ENCODE measurements at regions of chr2 and their contacts with region 1.

Region 1: GRCh38 chr2:205680067-205680466 is 2.2 kb upstream of the NRP2 start:
- DNase-seq: peak in 9 of 14 experiments; percentile 10 to 68 (median 22)
- ATAC-seq: no peak
- H3K4me3 ChIP-seq: no peak overlapping the region
- H3K4me3 Mint-ChIP-seq: peak overlapping the region; percentile 70
- H3K27ac ChIP-seq: no peak overlapping the region
- H3K27ac Mint-ChIP-seq: no peak overlapping the region
- H3K4me1 ChIP-seq: peaks cover 14% of the 10 kb centered on the region
- H3K4me1 Mint-ChIP-seq: peaks cover 23% of the 10 kb centered on the region
- H3K27me3 ChIP-seq: peaks cover 39 to 40% of the 10 kb centered on the region in 2 experiments
- H3K27me3 Mint-ChIP-seq: peaks cover 44% of the 10 kb centered on the region
- CTCF ChIP-seq: peak; percentile 60

Region 2: GRCh38 chr2:204260162-204260877 is 1419.7 kb before region 1 on chr2:
- CTCF ChIA-PET with region 1: no interaction called
- POLR2A ChIA-PET with region 1: no interaction called
- intact Hi-C with region 1: loop called (anchors 5 to 10 kb)
- DNase-seq: peak in 13 of 14 experiments; percentile 4 to 64 (median 31)
- ATAC-seq: peak; percentile 62
- H3K4me3 ChIP-seq: no peak overlapping the region
- H3K4me3 Mint-ChIP-seq: no peak overlapping the region
- H3K27ac ChIP-seq: no peak overlapping the region
- H3K27ac Mint-ChIP-seq: no peak overlapping the region
- H3K4me1 ChIP-seq: no peaks in the 10 kb centered on the region
- H3K4me1 Mint-ChIP-seq: no peaks in the 10 kb centered on the region
- H3K27me3 ChIP-seq: peaks cover 6 to 7% of the 10 kb centered on the region in 2 experiments
- H3K27me3 Mint-ChIP-seq: peaks cover 42% of the 10 kb centered on the region
- CTCF ChIP-seq: peak; percentile 77

Region 3: DNA sequence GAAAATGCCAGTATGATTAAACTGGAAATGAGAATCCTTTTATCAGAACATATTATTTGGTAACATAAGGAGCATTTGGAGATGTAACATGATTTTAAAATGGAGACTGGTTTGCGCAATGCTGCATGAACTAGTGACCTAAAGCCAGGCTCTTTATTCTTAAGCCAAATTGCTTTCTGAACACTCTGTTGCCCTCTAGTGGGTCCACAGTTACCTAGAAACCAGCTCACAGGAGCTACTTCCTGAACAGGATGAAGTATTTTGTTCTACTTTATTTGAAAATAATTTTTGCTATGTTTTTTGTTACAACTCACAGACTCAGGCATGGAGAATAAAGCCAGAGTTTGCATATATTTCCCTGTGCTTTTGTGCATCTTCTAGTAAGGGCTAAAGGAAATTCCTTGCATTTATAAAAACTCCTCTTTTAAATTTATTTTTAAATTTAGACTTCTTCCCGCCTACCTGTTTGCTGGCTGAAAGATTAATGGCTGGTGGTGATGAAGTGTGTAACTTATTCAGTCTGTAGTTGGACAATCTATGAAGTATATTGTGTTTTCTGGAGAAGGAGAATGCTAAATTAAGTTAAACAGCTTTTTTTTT is 988.1 kb before region 1 on chr2:
- CTCF ChIA-PET with region 1: no interaction called
- POLR2A ChIA-PET with region 1: no interaction called
- intact Hi-C with region 1: loop called (anchors 5 to 10 kb)
- DNase-seq: peak in 7 of 14 experiments; percentile 1 to 48 (median 11)
- ATAC-seq: no peak
- H3K4me3 ChIP-seq: no peak overlapping the region
- H3K4me3 Mint-ChIP-seq: no peak overlapping the region
- H3K27ac ChIP-seq: no peak overlapping the region
- H3K27ac Mint-ChIP-seq: no peak overlapping the region
- H3K4me1 ChIP-seq: no peaks in the 10 kb centered on the region
- H3K4me1 Mint-ChIP-seq: peaks cover 14% of the 10 kb centered on the region
- H3K27me3 ChIP-seq: no peaks in the 10 kb centered on the region
- H3K27me3 Mint-ChIP-seq: no peaks in the 10 kb centered on the region
- CTCF ChIP-seq: peak; percentile 63

Region 4: DNA sequence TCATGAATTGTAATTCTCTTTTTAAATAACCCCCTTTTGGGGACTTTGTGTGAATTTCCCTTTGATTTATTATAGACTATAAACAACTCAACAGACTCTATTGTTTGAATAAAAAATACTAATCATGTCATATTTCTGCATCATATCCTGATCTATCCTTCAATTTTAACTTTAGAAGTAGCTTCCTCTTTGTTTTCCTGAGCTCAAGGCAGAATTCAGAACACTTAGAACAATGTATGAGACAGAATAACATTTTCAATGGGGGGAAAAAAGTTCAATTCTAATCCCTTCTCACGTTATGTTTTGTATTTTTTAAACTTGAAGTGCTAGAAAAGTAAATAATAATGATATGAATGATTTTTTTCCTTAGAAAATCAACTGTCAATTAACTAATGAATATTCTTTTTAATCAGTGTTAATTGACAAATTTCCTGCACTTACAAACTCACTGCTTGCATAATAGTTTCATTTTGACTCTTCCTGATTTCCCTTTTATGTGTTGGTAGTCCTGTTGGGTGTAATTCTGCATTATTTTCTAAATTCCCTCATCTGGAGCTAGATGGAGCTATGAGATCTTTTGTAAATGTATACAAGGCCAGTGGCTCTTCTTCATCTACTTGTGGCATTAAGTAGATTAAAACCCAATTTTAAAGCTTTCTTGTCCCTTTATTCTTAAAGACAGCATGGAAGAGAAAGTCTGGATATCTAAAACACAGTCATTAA is 808.7 kb before region 1 on chr2:
- CTCF ChIA-PET with region 1: interaction called, 3 read pairs
- POLR2A ChIA-PET with region 1: interaction called, 3 read pairs
- intact Hi-C with region 1: loop called (anchors 1 to 2 kb)
- DNase-seq: peak in 3 of 14 experiments; percentile 60 to 71 (median 61)
- ATAC-seq: peak; percentile 59
- H3K4me3 ChIP-seq: no peak overlapping the region
- H3K4me3 Mint-ChIP-seq: no peak overlapping the region
- H3K27ac ChIP-seq: no peak overlapping the region
- H3K27ac Mint-ChIP-seq: no peak overlapping the region
- H3K4me1 ChIP-seq: peaks cover 3% of the 10 kb centered on the region
- H3K4me1 Mint-ChIP-seq: peaks cover 52% of the 10 kb centered on the region
- H3K27me3 ChIP-seq: no peaks in the 10 kb centered on the region
- H3K27me3 Mint-ChIP-seq: no peaks in the 10 kb centered on the region
- CTCF ChIP-seq: peak; percentile 84

Region 5: DNA sequence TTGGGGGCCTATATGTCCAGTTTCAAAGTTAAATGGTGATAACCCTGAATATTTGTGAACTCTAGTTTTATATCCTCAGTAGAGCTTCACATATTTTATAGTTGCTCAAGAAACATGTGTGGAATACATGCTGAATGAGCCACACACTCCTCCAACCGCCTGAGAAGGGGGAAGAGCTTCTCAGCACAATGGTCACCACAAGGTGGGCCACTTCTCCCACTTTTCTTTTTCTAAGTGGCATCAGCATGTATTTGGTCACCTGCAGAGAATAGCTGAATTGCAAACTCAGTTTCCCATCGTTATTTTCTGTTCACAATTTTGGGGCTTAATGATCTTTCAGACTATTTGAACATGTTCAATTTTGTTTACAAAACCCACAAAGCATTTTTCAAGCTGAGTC is 794.3 kb before region 1 on chr2:
- CTCF ChIA-PET with region 1: no interaction called
- POLR2A ChIA-PET with region 1: no interaction called
- intact Hi-C with region 1: loop called (anchors 5 kb)
- DNase-seq: peak in 3 of 14 experiments; percentile 13 to 28 (median 26)
- ATAC-seq: no peak
- H3K4me3 ChIP-seq: no peak overlapping the region
- H3K4me3 Mint-ChIP-seq: no peak overlapping the region
- H3K27ac ChIP-seq: no peak overlapping the region
- H3K27ac Mint-ChIP-seq: no peak overlapping the region
- H3K4me1 ChIP-seq: peaks cover 6% of the 10 kb centered on the region
- H3K4me1 Mint-ChIP-seq: peaks cover 20% of the 10 kb centered on the region
- H3K27me3 ChIP-seq: no peaks in the 10 kb centered on the region
- H3K27me3 Mint-ChIP-seq: no peaks in the 10 kb centered on the region
- CTCF ChIP-seq: no peak

Region 6: DNA sequence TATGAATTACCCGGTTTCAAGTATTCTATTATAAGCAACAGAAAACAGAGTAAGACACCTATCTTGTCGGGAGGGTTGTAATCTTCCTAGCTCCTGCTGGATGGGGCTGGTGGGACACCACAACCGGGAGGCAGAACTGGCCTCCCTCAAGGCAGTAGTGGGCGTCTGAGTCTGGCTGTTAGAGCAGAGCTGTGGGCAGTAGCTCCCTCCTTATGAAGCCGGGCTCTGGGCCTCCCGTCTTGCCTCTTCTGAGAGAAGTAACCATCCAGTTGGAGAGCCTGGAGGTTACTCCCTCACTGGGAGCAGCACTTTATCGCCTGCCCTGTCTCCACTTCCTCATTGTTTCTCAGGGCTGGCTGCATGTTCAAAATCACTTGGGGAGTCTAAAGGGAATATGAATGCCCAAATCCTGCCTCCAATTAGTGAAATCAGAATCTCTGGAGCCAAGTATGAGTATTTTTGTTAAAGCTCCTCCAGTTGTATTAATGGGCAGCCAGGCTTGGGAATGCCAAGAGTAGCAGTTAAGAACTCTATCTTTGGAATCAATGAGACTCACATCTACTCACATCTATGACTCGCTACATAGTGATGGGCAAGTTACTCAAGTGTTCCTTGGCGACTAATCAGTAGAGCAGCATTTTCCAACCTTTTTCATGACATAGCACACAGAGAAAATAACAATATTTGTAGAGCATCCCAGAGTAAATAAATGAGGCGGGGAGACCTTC is 25.0 kb before region 1 on chr2:
- CTCF ChIA-PET with region 1: no interaction called
- POLR2A ChIA-PET with region 1: no interaction called
- intact Hi-C with region 1: no loop called
- DNase-seq: no peak
- ATAC-seq: no peak
- H3K4me3 ChIP-seq: no peak overlapping the region
- H3K4me3 Mint-ChIP-seq: no peak overlapping the region
- H3K27ac ChIP-seq: no peak overlapping the region
- H3K27ac Mint-ChIP-seq: no peak overlapping the region
- H3K4me1 ChIP-seq: no peaks in the 10 kb centered on the region
- H3K4me1 Mint-ChIP-seq: peaks cover 3% of the 10 kb centered on the region
- H3K27me3 ChIP-seq: no peaks in the 10 kb centered on the region
- H3K27me3 Mint-ChIP-seq: no peaks in the 10 kb centered on the region
- CTCF ChIP-seq: no peak

Region 7: GRCh38 chr2:205700331-205701132 is 20.5 kb after region 1 on chr2:
- CTCF ChIA-PET with region 1: no interaction called
- POLR2A ChIA-PET with region 1: no interaction called
- intact Hi-C with region 1: no loop called
- DNase-seq: peak in 2 of 14 experiments; percentile 40 to 45
- ATAC-seq: no peak
- H3K4me3 ChIP-seq: no peak overlapping the region
- H3K4me3 Mint-ChIP-seq: no peak overlapping the region
- H3K27ac ChIP-seq: no peak overlapping the region
- H3K27ac Mint-ChIP-seq: no peak overlapping the region
- H3K4me1 ChIP-seq: no peaks in the 10 kb centered on the region
- H3K4me1 Mint-ChIP-seq: no peaks in the 10 kb centered on the region
- H3K27me3 ChIP-seq: no peaks in the 10 kb centered on the region
- H3K27me3 Mint-ChIP-seq: no peaks in the 10 kb centered on the region
- CTCF ChIP-seq: no peak

Region 8: GRCh38 chr2:205754924-205755321 is 74.9 kb after region 1 on chr2:
- CTCF ChIA-PET with region 1: no interaction called
- POLR2A ChIA-PET with region 1: no interaction called
- intact Hi-C with region 1: no loop called
- DNase-seq: no peak
- ATAC-seq: no peak
- H3K4me3 ChIP-seq: no peak overlapping the region
- H3K4me3 Mint-ChIP-seq: no peak overlapping the region
- H3K27ac ChIP-seq: no peak overlapping the region
- H3K27ac Mint-ChIP-seq: no peak overlapping the region
- H3K4me1 ChIP-seq: no peaks in the 10 kb centered on the region
- H3K4me1 Mint-ChIP-seq: no peaks in the 10 kb centered on the region
- H3K27me3 ChIP-seq: peaks cover 0 to 3% of the 10 kb centered on the region in 2 experiments
- H3K27me3 Mint-ChIP-seq: peaks cover 20% of the 10 kb centered on the region
- CTCF ChIP-seq: no peak

Measured in CD4-positive, alpha-beta T cell (primary cell).